Activated T-helper 1 cell treated with anti-CD3 and anti-CD28 coated beads, Interleukin-12 subunit alpha, Interleukin-12 subunit beta, Interleukin-2, Interleukin-4 antibody, amounts not matched to agents 30 ng/mL and 10 ng/mL and 1 ng/mL, durations not matched to agents 14 hours and 24 hours and 36 hours (primary cell): ENCODE measurements at regions of chr15 and their contacts with region 1.

Region 1: GRCh38 chr15:89334510-89335288 is at the start of gene POLG:
- DNase-seq: peak; percentile 99
- H3K4me3 Mint-ChIP-seq: peak within 1 kb of the TSS; percentile 85
- H3K27ac Mint-ChIP-seq: peak within 1 kb of the TSS; percentile 91
- H3K4me1 Mint-ChIP-seq: peaks cover 63% of the 10 kb centered on the region
- H3K27me3 Mint-ChIP-seq: peaks cover 5% of the 10 kb centered on the region
- total RNA-seq, gene POLG: 116 and 134 TPM in 2 replicates

Region 2: DNA sequence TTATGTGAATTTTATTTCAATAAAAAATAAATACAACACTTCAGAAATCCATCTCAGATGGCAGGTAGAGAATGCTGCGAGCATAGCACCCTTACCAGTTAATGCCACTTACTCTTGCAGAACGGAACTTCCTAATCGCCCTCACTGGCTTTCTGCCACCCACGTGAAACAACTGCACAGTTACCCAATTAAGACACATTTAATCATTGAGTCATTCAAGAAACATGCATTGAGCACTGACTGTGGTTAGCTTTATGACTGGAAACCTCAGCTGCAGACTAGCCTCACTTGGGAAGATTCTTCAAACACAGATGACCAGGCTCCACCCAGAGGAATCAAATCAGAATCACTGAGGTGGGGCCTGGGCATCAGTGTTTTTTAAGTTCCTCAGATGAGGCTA is 416.0 kb before region 1 on chr15:
- intact Hi-C with region 1: loop called (anchors 1 kb)
- DNase-seq: no peak
- H3K4me3 Mint-ChIP-seq: peak overlapping the region; percentile 20
- H3K27ac Mint-ChIP-seq: peak overlapping the region; percentile 6
- H3K4me1 Mint-ChIP-seq: peaks cover 34% of the 10 kb centered on the region
- H3K27me3 Mint-ChIP-seq: peaks cover 2% of the 10 kb centered on the region

Region 3: DNA sequence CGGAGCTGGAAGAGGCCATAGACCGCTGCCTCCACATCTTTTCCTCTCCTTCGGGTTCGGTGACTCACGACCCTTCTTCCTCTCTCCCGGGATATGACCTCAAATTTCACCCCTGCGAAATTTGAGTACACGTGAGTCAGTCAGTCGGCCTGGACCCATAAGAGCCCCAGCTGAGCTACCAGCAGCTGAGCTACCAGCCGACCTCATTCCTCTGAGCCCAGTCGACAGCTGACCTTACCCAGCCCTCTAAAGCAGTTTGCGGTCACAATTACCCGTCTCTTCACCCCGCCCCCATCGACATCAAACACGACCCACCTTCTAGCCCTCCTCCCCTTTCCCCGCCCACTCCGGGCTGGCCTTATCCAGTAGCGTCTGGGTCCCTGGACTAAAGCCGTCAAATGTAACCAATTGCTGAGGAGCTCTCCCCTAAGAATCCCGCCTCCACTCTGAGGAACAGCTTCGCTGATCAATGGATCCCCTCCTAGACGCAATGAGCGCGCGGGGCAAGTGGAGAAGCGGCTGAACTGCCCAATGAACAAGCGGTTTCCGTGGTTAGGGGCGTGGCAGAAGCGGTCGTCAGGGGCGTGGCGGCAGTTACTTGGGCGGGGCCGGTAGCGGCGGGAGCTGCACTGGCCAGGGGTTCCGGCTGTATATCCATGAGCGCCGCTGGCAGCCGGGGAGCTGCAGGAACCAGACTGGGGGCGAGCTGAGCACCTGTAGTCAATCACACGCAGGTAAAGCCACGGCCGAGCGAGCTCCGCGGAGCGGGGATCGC is 246.7 kb before region 1 on chr15 and contains the start of gene ABHD2:
- intact Hi-C with region 1: loop called (anchors 2 kb)
- DNase-seq: peak; percentile 98
- H3K4me3 Mint-ChIP-seq: no peak within 1 kb of the TSS
- H3K27ac Mint-ChIP-seq: no peak within 1 kb of the TSS
- H3K4me1 Mint-ChIP-seq: peaks cover 33% of the 10 kb centered on the region
- H3K27me3 Mint-ChIP-seq: no peaks in the 10 kb centered on the region
- total RNA-seq, gene ABHD2: 66.5 and 66.7 TPM in 2 replicates

Region 4: GRCh38 chr15:89243691-89244471 is 90.8 kb before region 1 on chr15 and contains the start of gene FANCI:
- intact Hi-C with region 1: loop called (anchors 1 kb)
- DNase-seq: peak; percentile 95
- H3K4me3 Mint-ChIP-seq: peak within 1 kb of the TSS; percentile 96
- H3K27ac Mint-ChIP-seq: peak within 1 kb of the TSS; percentile 90
- H3K4me1 Mint-ChIP-seq: peaks cover 53% of the 10 kb centered on the region
- H3K27me3 Mint-ChIP-seq: peaks cover 9% of the 10 kb centered on the region
- total RNA-seq, gene FANCI: 167 and 172 TPM in 2 replicates

Region 5: GRCh38 chr15:89358755-89359439 is 24.2 kb after region 1 on chr15:
- intact Hi-C with region 1: loop called (anchors 1 kb)
- DNase-seq: peak; percentile 80
- H3K4me3 Mint-ChIP-seq: peak overlapping the region; percentile 81
- H3K27ac Mint-ChIP-seq: peak overlapping the region; percentile 23
- H3K4me1 Mint-ChIP-seq: peaks cover 11% of the 10 kb centered on the region
- H3K27me3 Mint-ChIP-seq: peaks cover 63% of the 10 kb centered on the region

Region 6: GRCh38 chr15:89378296-89379151 is 43.8 kb after region 1 on chr15:
- intact Hi-C with region 1: no loop called
- DNase-seq: no peak
- H3K4me3 Mint-ChIP-seq: no peak overlapping the region
- H3K27ac Mint-ChIP-seq: peak overlapping the region; percentile 42
- H3K4me1 Mint-ChIP-seq: no peaks in the 10 kb centered on the region
- H3K27me3 Mint-ChIP-seq: peaks cover 66% of the 10 kb centered on the region

Region 7: GRCh38 chr15:89772932-89773583 is 438.4 kb after region 1 on chr15:
- intact Hi-C with region 1: no loop called
- DNase-seq: no peak
- H3K4me3 Mint-ChIP-seq: no peak overlapping the region
- H3K27ac Mint-ChIP-seq: no peak overlapping the region
- H3K4me1 Mint-ChIP-seq: no peaks in the 10 kb centered on the region
- H3K27me3 Mint-ChIP-seq: peaks cover 12% of the 10 kb centered on the region

Region 8: DNA sequence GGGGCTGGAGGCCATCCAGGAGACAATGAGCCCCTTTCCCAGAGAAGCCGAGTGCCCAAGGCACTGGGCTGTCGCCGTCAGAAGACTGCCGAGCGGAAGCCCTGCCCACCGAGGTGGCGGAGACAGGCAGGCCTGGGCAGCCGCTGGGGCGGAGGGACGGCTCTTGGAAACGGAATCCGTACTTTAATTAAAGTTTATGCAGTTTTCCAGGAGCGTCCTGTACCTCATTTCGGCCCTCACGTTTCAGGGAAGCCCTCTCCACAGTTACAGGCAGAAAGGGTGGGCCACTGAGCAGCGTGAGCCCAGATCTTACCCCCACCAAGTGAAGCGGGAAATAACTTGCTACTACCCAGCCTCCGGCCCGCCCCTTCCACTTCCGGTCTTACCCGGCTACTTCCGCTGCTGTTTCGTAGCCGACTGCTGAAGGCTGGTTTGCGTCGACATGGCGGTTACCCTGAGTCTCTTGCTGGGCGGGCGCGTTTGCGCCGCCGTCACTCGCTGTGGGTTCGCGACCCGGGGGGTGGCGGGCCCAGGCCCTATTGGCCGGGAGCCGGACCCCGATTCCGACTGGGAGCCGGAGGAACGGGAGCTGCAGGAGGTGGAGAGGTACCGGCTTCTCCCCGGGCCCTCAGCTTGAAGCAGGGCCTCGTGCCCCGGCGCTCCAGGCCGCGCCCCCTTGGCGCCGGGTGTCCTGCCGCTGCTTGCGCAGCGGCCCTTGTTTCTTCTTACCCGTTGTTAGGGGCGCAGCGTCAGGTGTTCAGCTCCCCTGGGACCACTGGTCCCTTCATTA is 930.8 kb after region 1 on chr15 and contains the start of gene NGRN:
- intact Hi-C with region 1: loop called (anchors 10 kb)
- DNase-seq: peak; percentile 89
- H3K4me3 Mint-ChIP-seq: peak within 1 kb of the TSS; percentile 99
- H3K27ac Mint-ChIP-seq: peak within 1 kb of the TSS; percentile 99
- H3K4me1 Mint-ChIP-seq: peaks cover 43% of the 10 kb centered on the region
- H3K27me3 Mint-ChIP-seq: no peaks in the 10 kb centered on the region
- total RNA-seq, gene NGRN: 39.0 and 39.9 TPM in 2 replicates

Region 9: DNA sequence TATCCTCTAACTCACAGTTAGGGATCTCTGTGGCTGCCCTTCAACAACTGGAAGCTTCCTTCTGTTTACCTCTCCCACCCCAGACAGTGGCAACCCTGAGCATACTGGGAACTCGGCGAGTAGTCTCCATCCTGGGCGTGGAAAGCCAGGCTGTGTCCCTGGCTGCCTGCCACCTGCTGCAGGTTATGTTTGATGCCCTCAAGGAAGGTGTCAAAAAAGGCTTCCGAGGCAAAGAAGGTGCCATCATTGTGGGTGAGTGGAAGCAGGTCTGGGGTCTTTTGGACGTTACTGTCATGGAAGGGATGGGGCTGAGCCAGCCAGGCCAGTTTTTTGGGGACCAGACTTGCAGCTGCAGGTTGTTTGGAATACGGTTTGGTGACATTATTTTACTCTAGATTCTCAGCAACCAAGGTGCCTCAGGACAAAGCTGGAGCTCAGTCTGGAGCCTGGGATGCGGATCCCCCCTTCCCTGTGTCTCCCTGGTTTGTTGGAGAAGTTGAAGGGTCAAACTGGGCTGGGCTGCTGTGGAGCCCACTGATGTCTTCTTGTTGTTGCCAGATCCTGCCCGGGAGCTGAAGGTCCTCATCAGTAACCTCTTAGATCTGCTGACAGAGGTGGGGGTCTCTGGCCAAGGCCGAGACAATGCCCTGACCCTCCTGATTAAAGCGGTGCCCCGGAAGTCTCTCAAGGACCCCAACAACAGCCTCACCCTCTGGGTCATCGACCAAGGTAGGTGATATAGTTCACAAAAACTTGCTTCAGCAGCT is 1607.8 kb after region 1 on chr15:
- intact Hi-C with region 1: no loop called
- DNase-seq: no peak
- H3K4me3 Mint-ChIP-seq: no peak overlapping the region
- H3K27ac Mint-ChIP-seq: no peak overlapping the region
- H3K4me1 Mint-ChIP-seq: no peaks in the 10 kb centered on the region
- H3K27me3 Mint-ChIP-seq: no peaks in the 10 kb centered on the region